AG04449 (cell line): ENCODE measurements at regions of chr9 and their contacts with region 1.

Region 1: GRCh38 chr9:89549031-89549644 is 51.2 kb upstream of the SEMA4D start:
- DNase-seq: no peak
- H3K4me3 ChIP-seq: no peak overlapping the region
- CTCF ChIP-seq: peak; percentile 91

Region 2: GRCh38 chr9:89318123-89319014 is 230.8 kb before region 1 on chr9 and contains the start of gene SECISBP2:
- CTCF ChIA-PET with region 1: interaction called, 17 read pairs
- POLR2A ChIA-PET with region 1: no interaction called
- DNase-seq: peak; percentile 78
- H3K4me3 ChIP-seq: peak within 1 kb of the TSS; percentile 70
- CTCF ChIP-seq: peak; percentile 62

Region 3: DNA sequence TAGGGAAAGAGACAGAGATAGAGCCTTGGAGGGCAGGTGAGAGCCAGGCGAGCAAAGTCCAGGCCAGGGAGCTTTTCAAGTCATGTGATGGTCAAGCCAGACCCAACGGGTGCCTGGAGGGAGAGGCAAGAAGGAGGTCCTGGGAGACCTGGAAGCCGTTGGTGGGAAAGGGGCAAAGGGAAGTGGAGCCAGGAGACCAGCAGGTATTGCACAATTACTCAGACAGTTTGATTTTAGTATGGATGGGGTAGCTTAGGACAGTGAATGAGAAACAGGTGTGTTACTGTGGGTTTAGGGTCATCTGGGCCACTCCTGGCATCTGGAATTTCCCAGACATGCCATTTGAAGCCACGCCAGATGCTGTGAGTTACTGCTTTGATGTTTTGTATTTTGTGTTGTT is 225.7 kb before region 1 on chr9:
- CTCF ChIA-PET with region 1: interaction called, 17 read pairs
- POLR2A ChIA-PET with region 1: no interaction called
- DNase-seq: no peak
- H3K4me3 ChIP-seq: no peak overlapping the region
- CTCF ChIP-seq: no peak

Region 4: DNA sequence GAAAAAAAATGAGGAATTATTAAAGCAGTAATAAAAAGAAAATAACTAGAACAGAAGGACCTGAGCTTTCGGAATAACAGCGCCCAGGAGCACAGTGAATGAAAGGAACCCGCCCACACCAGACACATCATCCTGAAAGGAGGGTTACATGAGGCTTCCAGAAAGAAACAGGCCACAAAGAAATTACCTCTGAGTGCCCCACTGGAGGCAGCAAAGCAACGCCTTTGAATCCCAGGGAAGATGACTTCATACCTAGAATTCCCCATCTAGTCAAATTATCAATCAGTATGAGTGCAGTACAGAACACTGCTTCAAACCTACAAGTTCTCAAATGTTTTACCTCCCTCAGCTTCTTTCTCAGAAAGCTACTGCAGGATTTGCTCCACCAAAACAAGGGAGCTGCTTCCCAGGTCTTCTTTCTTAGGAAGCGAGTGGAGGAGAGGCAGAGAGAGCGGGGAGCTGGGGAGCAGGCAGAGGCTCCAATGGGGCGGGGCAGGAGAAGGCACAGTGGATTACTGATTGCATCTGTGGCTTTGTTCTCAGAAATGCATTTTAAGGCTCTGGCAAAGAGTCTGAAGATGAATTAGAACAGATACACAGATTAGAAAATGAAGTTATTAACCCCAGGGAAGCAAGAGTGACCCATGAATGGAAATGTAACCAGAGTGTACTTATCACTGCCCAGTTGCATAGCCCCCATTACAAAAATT is 138.3 kb before region 1 on chr9:
- CTCF ChIA-PET with region 1: interaction called, 14 read pairs
- POLR2A ChIA-PET with region 1: no interaction called
- DNase-seq: no peak
- H3K4me3 ChIP-seq: no peak overlapping the region
- CTCF ChIP-seq: no peak

Region 5: DNA sequence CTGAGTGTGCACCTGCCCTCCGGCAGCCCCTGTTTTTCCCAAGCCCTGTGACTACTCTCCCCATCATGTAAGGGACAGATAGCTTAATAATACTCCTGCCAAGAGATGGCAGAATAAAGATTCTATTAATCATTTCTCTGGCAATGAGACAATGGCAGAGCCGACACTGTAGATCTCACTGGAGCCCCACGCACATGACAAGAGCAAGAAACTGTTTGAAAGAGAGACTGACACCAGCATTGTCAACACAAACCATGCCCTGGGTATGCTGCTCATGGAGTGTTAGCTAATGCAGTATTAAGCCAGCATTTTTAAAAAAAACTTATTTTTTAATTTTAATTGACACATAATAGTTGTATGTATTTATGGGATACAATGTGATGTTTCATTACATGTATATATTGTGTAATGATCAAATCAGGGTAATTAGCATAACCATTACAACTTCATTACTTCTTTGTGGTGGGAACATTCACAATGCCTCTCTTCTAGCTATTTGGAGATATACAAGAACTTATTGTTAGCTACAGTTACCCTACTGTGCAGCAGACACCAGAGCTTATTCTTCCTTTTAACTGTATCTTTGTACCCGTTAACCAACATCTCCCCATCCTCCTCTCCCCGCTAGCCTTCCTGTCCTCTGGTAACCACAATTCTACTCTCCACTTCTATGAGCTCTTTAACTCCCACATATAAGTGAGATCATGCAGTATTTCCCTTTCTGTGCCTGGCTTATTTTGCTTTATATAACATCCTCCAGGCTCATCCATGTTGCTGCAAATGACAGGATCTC is 19.7 kb before region 1 on chr9:
- CTCF ChIA-PET with region 1: interaction called, 13 read pairs
- POLR2A ChIA-PET with region 1: no interaction called
- DNase-seq: no peak
- H3K4me3 ChIP-seq: no peak overlapping the region
- CTCF ChIP-seq: no peak

Region 6: GRCh38 chr9:89538871-89539270 is 10.3 kb before region 1 on chr9:
- CTCF ChIA-PET with region 1: interaction called, 24 read pairs
- POLR2A ChIA-PET with region 1: no interaction called
- DNase-seq: no peak
- H3K4me3 ChIP-seq: no peak overlapping the region
- CTCF ChIP-seq: no peak

Region 7: DNA sequence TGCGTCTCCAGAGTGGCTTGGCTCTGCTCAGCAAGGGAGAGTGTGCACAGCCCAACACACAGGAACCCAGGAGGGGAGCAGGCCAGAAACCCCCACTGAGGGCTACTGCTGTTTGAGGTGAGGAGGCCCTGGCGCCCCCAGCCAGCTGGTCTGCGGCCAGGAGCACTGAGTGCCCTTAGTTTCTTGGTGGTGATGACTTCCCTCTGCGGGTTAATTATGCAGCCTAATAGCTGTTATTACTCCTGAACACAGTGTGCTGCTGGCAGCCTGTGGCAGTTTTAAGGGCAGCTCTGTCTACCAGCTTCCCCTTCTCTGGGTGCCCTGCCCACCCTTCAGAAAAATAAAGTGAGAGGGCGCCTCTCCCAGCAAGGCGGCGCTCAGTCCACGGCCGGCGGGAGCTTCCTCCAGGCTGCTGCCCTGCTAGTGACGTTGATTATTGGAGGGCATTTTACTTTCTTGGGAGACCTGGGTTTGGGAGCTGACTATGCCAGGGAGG is 74.8 kb after region 1 on chr9:
- CTCF ChIA-PET with region 1: no interaction called
- POLR2A ChIA-PET with region 1: no interaction called
- DNase-seq: no peak
- H3K4me3 ChIP-seq: no peak overlapping the region
- CTCF ChIP-seq: no peak